ENCODE measurements at regions of chr13 and their contacts with region 1.

Region 1: GRCh38 chr13:28718543-28719226 is at the start of gene SLC46A3:
- DNase-seq: peak; percentile 100
- ATAC-seq: peak; percentile 96 to 99 (median 98)
- H3K4me3 ChIP-seq: peak within 1 kb of the TSS; percentile 96
- H3K27ac ChIP-seq: peak within 1 kb of the TSS; percentile 99
- H3K4me1 ChIP-seq: peaks cover 18% of the 10 kb centered on the region
- H3K27me3 ChIP-seq: no peaks in the 10 kb centered on the region
- CTCF ChIP-seq: peak; percentile 6
- total RNA-seq, gene SLC46A3: 5.0 to 6.6 (median 6.0) TPM

Region 2: GRCh38 chr13:28658796-28659620 is 59.7 kb before region 1 on chr13 and contains the start of gene POMP:
- intact Hi-C with region 1: loop called (anchors 2 to 5 kb)
- DNase-seq: peak; percentile 95 to 98
- ATAC-seq: peak; percentile 99
- H3K4me3 ChIP-seq: peak within 1 kb of the TSS; percentile 92
- H3K27ac ChIP-seq: peak within 1 kb of the TSS; percentile 95
- H3K4me1 ChIP-seq: peaks cover 37% of the 10 kb centered on the region
- H3K27me3 ChIP-seq: no peaks in the 10 kb centered on the region
- CTCF ChIP-seq: no peak
- total RNA-seq, gene POMP: 76.3 to 128 (median 122) TPM

Region 3: GRCh38 chr13:29020314-29020713 is 301.6 kb after region 1 on chr13:
- intact Hi-C with region 1: no loop called
- DNase-seq: no peak
- ATAC-seq: no peak
- H3K4me3 ChIP-seq: no peak overlapping the region
- H3K27ac ChIP-seq: no peak overlapping the region
- H3K4me1 ChIP-seq: no peaks in the 10 kb centered on the region
- H3K27me3 ChIP-seq: no peaks in the 10 kb centered on the region
- CTCF ChIP-seq: no peak

Measured in psoas muscle (tissue), 8 donors.